ENCODE measurements at regions of chr4 and their contacts with region 1.

Region 1: DNA sequence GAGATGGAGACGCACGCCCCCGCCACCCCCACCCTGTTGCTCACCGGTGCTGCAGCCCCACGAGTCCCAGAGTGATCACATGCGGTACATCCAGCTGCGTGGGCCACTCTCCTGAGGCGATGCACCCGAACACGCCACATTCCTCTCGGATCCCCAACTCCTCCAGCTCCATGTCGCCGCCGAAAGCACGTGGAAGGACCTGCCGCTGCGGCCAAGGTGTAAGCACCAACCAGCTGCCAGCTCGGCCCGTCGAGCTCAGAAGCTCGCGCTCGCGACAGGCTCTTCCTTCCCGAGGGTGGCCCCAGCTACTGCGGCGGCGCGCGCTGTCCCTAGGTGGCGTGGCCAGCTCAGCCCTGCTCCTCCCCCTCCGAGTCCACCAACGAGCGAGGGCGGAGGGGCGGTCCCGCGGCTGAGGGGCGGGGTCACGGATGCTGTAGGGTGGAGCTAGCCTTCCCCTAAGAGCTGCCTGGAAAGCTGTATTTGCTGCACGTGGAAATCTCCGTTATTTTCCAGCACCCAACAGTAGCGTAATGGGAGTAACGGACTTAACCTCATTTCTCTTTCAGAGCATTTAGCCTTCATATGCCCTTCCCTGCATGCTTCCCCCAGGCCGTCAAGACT is at the start of gene PPAT:
- DNase-seq: peak; percentile 100
- H3K4me3 Mint-ChIP-seq: peak within 1 kb of the TSS; percentile 89
- H3K27ac Mint-ChIP-seq: peak within 1 kb of the TSS; percentile 95
- H3K4me1 Mint-ChIP-seq: peaks cover 41% of the 10 kb centered on the region
- H3K27me3 Mint-ChIP-seq: no peaks in the 10 kb centered on the region
- total RNA-seq, gene PPAT: 60.8 and 63.6 TPM in 2 replicates

Region 2: DNA sequence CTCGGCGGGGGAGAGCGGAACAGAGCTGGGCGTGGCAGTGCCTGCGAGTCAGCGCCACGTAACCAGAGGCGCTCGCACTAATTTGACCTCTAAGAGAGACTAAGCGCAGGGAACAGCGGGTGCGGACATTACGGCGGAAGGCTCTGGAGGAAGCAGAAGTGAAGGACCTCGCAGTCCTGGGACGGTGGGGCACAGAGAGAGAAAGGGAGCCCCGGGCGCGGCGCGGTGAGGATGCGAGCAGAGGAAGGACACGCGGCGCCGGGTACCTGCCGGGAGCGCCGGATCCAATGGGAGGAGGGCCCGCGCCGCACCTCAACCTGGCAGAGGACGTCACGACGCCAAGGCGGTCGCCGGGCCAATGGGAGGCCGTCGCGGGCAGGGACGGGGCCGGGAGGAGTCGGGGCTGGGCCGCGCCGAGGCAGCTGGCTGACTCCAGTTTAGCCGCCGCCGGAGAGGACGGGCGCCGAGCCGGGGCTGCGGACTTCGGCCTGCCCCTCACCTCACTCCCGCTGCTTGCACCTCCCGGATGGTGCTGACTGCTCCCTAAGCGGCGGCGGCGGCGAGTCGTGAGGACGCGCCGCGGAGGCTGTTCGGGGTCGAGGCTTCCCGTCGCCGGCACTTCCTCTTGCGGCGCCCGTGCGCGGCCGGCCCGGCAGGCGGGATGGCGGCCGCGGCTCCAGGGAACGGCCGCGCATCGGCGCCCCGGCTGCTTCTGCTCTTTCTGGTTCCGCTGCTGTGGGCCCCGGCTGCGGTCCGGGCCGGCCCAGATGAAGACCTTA is 1039.7 kb before region 1 on chr4 and contains the start of gene TMEM165:
- intact Hi-C with region 1: loop called (anchors 5 kb)
- DNase-seq: peak; percentile 97
- H3K4me3 Mint-ChIP-seq: peak within 1 kb of the TSS; percentile 100
- H3K27ac Mint-ChIP-seq: peak within 1 kb of the TSS; percentile 97
- H3K4me1 Mint-ChIP-seq: peaks cover 33% of the 10 kb centered on the region
- H3K27me3 Mint-ChIP-seq: no peaks in the 10 kb centered on the region
- total RNA-seq, gene TMEM165: 87.2 and 99.1 TPM in 2 replicates

Region 3: GRCh38 chr4:56414135-56414670 is 21.2 kb before region 1 on chr4:
- intact Hi-C with region 1: loop called (anchors 2 kb)
- DNase-seq: no peak
- H3K4me3 Mint-ChIP-seq: no peak overlapping the region
- H3K27ac Mint-ChIP-seq: no peak overlapping the region
- H3K4me1 Mint-ChIP-seq: peaks cover 12% of the 10 kb centered on the region
- H3K27me3 Mint-ChIP-seq: no peaks in the 10 kb centered on the region

Region 4: DNA sequence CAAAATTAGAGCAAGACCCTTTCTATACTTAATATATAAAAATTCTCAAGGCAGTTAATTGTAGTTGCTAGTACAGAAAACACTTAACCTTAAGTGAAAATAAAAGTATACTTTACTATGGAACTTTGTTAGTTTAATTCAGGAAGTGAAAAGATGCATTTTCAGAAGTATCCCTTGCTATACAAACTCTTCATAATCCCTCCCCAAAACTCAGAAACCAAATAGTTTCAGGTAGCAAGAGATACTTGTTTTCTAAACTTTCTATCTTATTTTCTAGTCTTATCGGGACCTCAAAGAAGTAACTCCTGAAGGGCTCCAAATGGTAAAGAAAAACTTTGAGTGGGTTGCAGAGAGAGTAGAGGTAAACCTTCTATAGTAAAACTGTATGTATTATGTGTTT is 14.9 kb after region 1 on chr4:
- intact Hi-C with region 1: loop called (anchors 2 kb)
- DNase-seq: no peak
- H3K4me3 Mint-ChIP-seq: no peak overlapping the region
- H3K27ac Mint-ChIP-seq: no peak overlapping the region
- H3K4me1 Mint-ChIP-seq: peaks cover 14% of the 10 kb centered on the region
- H3K27me3 Mint-ChIP-seq: no peaks in the 10 kb centered on the region

Region 5: DNA sequence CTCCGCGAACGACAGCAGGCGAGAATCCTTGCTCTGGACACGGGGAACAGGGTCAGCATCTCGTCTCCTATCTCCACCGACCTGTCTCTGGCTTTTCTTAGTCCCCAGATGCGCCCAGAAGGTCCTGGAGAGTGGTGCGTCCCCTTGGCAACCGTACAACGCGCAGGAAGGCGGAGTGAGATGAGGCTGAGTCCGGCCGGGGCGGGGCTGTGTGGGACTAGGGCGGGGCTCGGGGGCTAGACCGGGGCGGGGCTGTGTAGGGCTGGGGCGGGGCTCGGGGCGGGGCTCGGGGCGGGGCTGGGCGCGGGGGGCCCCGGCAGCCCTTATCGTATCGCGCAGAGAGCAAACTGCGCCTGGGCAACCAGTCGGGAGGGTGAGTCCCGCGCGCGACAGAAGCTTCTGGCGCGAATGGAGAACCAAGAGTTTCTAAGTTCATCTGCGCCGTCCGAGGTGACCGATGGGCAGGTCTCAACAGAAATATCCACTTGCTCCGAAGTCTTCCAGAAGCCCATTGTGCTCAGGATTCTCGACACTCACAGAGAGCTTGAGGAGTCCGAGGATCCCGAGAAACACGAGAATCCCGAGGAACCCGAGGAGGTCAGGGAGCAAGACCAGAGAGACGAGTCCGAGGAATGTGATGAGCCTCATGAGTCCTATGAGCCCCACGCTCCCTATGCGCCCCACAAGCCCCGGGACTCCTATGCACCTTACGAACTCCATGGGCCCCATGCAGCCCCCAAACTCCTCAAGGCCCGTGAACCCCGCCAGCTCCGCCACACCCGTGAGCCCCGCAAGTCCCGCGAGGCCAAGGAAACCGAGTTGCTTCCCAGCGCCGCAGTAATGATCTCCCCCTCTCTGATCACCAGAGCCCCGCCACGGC is 95.1 kb after region 1 on chr4:
- intact Hi-C with region 1: loop called (anchors 2 kb)
- DNase-seq: peak; percentile 92
- H3K4me3 Mint-ChIP-seq: no peak overlapping the region
- H3K27ac Mint-ChIP-seq: no peak overlapping the region
- H3K4me1 Mint-ChIP-seq: no peaks in the 10 kb centered on the region
- H3K27me3 Mint-ChIP-seq: peaks cover 28% of the 10 kb centered on the region

Region 6: DNA sequence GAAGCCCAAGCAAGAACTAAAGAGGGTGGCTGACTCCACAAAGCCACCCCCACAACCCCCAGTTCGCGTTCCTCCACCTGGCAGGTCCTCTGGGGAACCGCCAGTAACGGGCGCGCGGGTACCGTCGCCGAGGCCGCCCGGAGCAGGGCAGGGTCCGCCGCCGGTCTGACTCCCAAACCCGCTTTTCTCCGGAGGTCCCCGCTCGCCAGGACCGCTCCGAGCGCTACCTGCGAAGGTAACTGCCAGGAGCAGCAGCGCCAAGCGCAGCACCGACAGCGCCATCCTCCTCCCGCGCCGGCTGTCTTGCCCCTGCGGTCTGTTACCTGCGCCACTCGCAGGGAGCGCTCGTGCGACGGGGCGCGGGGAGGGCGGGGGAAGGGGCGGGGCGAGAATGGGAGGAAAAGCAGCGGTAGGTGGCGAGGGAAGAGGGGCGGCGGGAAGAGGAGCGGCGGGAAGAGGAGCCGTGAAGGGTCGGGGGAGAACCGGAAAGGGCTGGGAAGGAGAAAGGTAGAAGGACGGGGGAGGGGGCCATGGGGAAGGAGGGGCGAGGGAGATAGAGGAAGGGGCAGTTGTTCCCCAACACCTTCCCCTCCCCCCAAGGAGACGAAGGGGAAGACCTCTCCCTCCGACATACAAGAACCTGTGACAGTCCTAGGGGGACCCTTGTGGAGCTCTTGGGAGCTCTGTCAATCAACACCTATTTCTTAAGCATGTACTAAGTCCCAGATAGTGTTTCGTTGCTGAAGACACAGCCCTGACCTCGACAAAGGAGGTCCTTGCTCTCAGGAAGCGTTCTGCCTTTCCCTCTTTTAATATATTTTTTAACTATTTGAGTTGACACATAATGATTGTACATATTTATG is 386.2 kb after region 1 on chr4 and contains the start of gene SPINK2:
- intact Hi-C with region 1: loop called (anchors 5 kb)
- DNase-seq: peak; percentile 86
- H3K4me3 Mint-ChIP-seq: peak within 1 kb of the TSS; percentile 72
- H3K27ac Mint-ChIP-seq: no peak within 1 kb of the TSS
- H3K4me1 Mint-ChIP-seq: peaks cover 33% of the 10 kb centered on the region
- H3K27me3 Mint-ChIP-seq: peaks cover 36% of the 10 kb centered on the region
- total RNA-seq, gene SPINK2: 0.37 and 0.54 TPM in 2 replicates

Region 7: DNA sequence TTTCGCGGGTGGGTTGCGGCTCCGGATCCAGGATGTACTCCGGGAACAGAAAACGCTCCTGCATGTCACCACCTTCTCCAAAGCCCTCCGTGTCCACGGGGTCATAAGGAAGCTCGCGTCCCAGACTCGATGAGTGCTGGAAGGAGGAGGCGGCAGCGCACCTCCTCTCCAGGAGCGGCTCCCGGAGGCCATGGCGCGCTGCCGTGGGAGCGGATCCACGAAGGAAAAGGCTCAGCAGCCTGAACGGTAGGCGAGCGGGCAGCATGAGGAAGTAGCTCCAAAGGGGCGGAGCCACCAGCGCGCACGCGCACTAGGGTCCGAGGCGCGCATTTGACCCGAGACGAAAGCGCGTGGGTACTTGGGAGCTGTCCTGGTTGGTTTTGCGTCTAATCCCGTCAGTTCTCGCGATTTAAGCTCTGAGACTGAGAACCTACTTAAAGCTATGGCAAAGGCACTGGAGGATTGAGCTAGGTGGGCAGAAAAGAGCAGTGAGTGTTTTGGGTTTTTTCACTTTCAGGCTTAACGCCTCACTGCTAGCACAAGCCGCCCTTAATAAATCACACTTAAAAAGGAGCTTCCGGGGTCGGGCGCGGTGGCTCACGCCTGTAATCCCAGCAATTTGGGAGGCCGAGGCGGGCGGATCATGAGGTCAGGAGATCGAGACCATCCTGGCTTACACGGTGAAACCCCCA is 542.1 kb after region 1 on chr4 and contains the start of gene NOA1:
- intact Hi-C with region 1: loop called (anchors 1 kb)
- DNase-seq: peak; percentile 100
- H3K4me3 Mint-ChIP-seq: peak within 1 kb of the TSS; percentile 98
- H3K27ac Mint-ChIP-seq: peak within 1 kb of the TSS; percentile 98
- H3K4me1 Mint-ChIP-seq: peaks cover 50% of the 10 kb centered on the region
- H3K27me3 Mint-ChIP-seq: peaks cover 2% of the 10 kb centered on the region
- total RNA-seq, gene NOA1: 17.7 and 18.5 TPM in 2 replicates